ENCODE measurements at regions of chr10 and their contacts with region 1.

Region 1: DNA sequence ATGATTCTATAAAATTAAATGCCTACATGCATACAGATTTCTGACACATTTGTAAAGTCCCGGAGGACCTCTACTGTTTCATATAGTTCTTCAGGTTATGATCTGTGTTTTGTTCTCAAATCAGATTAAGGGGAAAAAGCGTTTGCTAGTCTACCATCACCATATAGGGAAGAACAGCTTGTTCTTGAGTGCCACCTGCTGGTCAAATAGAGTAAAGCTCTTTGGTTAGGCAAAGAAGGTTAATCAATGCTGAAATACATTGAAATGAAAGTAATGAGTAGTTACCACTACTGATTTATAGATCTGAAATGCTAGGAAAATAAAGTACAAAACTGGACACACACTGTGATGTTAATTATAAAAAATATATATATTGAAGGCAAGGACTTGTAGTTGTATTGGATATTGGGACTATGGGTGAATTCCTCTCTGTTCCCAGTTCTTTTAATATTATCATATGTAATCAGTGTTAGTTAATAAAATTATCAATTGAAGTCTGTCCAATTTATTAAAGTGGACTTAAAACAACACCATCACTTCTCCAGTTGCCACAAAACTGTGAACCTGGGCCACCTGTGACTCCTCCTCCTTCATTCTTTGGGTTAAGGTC is 72.6 kb upstream of the PDLIM1 start:
- DNase-seq: peak in 8 of 9 donors; percentile 6 to 59 (median 48)
- ATAC-seq: peak; percentile 75
- H3K4me3 ChIP-seq: no peak overlapping the region
- H3K4me3 Mint-ChIP-seq: no peak overlapping the region
- H3K27ac ChIP-seq: no peak overlapping the region
- H3K27ac Mint-ChIP-seq: no peak overlapping the region
- H3K4me1 ChIP-seq: no peaks in the 10 kb centered on the region
- H3K4me1 Mint-ChIP-seq: no peaks in the 10 kb centered on the region
- H3K27me3 ChIP-seq: no peaks in the 10 kb centered on the region
- H3K27me3 Mint-ChIP-seq: peaks cover 4 to 18% (median 5%) of the 10 kb centered on the region in 5 donors

Region 2: DNA sequence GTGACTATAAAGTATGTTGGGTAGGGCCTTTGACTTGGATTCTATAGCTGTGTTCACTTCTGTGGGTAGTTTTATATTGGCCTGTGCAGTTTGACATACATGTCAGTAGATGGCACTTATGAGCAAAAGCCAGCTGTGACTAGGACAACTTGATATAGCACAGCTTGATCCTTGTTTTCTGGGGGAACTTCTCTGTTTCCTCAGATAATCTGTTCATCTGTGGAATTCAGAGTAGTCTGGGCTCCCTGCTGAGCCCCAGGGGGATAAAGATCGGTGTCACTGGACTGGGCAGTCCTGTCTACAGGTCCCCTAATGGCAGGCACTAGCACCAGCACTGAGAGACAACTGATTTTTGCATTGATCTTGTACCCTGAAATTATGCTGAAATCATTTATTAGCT is 399.5 kb before region 1 on chr10:
- CTCF ChIA-PET with region 1: no interaction called
- POLR2A ChIA-PET with region 1: no interaction called
- intact Hi-C with region 1: loop called in 1 of 2 experiments (anchors 10 kb)
- DNase-seq: no peak
- ATAC-seq: no peak
- H3K4me3 ChIP-seq: no peak overlapping the region
- H3K4me3 Mint-ChIP-seq: no peak overlapping the region
- H3K27ac ChIP-seq: no peak overlapping the region
- H3K27ac Mint-ChIP-seq: no peak overlapping the region
- H3K4me1 ChIP-seq: no peaks in the 10 kb centered on the region
- H3K4me1 Mint-ChIP-seq: no peaks in the 10 kb centered on the region
- H3K27me3 ChIP-seq: no peaks in the 10 kb centered on the region
- H3K27me3 Mint-ChIP-seq: no peaks in the 10 kb centered on the region

Region 3: GRCh38 chr10:95133016-95133752 is 230.2 kb before region 1 on chr10:
- CTCF ChIA-PET with region 1: interaction called, 3 read pairs
- POLR2A ChIA-PET with region 1: no interaction called
- intact Hi-C with region 1: loop called in 1 of 2 experiments (anchors 1 kb)
- DNase-seq: peak in 8 of 9 donors; percentile 22 to 74 (median 48)
- ATAC-seq: peak; percentile 67
- H3K4me3 ChIP-seq: no peak overlapping the region
- H3K4me3 Mint-ChIP-seq: no peak overlapping the region
- H3K27ac ChIP-seq: no peak overlapping the region
- H3K27ac Mint-ChIP-seq: no peak overlapping the region
- H3K4me1 ChIP-seq: no peaks in the 10 kb centered on the region
- H3K4me1 Mint-ChIP-seq: no peaks in the 10 kb centered on the region
- H3K27me3 ChIP-seq: no peaks in the 10 kb centered on the region
- H3K27me3 Mint-ChIP-seq: peaks cover 0 to 9% (median 0%) of the 10 kb centered on the region in 5 donors

Region 4: GRCh38 chr10:95246579-95247051 is 116.8 kb before region 1 on chr10:
- CTCF ChIA-PET with region 1: interaction called, 6 read pairs
- POLR2A ChIA-PET with region 1: no interaction called
- intact Hi-C with region 1: loop called (anchors 1 kb)
- DNase-seq: peak in 7 of 9 donors; percentile 25 to 65 (median 43)
- ATAC-seq: peak; percentile 72
- H3K4me3 ChIP-seq: no peak overlapping the region
- H3K4me3 Mint-ChIP-seq: no peak overlapping the region
- H3K27ac ChIP-seq: no peak overlapping the region
- H3K27ac Mint-ChIP-seq: no peak overlapping the region
- H3K4me1 ChIP-seq: no peaks in the 10 kb centered on the region
- H3K4me1 Mint-ChIP-seq: peaks cover 0 to 38% (median 0%) of the 10 kb centered on the region in 7 donors
- H3K27me3 ChIP-seq: no peaks in the 10 kb centered on the region
- H3K27me3 Mint-ChIP-seq: peaks cover 2 to 28% (median 14%) of the 10 kb centered on the region in 5 donors

Region 5: DNA sequence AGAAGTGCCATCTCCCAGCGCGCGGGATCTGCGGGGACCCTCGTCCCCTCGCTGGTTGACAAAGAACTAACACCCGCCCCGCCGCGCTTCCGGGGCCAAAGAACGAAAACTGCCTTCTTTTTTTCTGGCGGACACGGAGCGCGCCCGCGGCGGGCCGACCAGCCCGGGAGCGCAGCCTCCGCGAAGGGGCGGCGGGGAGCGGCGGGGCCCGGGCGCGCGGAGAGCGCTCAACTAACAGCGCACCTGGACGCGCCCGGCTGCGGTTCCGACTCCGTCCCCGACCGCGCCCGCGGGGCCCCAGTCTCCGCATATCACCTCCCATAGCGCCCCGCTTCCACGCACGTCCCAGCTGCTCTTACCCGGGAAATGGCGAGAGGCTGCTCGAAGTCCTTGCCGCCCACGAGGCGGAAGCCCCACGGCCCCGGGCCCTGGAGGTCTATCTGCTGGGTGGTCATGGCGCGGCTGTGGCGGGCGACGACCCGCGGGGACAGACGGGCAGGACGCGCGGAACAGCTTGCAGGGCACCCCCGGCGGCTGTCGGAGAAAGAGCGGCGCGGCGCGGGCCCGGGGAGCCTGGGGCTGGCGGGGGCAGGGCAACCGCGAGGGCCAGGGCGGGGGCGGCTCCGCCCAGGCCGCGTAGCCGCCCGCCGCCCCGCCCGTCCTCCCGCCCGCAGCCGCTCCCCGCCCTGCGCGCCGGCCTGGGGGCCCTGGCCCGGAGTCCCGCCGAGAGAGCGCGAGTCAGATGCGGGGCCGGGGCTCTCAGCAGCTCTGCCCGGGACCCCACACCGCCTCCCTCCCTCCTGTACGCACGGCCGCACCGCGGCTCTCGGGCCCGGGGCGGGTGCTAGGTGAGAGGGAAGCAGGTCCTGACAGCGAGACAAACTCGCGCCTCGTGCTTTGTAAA is 72.7 kb before region 1 on chr10 and contains the start of gene PDLIM1:
- CTCF ChIA-PET with region 1: no interaction called
- POLR2A ChIA-PET with region 1: no interaction called
- intact Hi-C with region 1: loop called in 1 of 2 experiments (anchors 2 kb)
- DNase-seq: peak in 4 of 9 donors; percentile 16 to 57 (median 23)
- ATAC-seq: peak; percentile 82
- H3K4me3 ChIP-seq: peak within 1 kb of the TSS; percentile 43
- H3K4me3 Mint-ChIP-seq: peak within 1 kb of the TSS; percentile 71 to 88 (median 78)
- H3K27ac ChIP-seq: no peak within 1 kb of the TSS
- H3K27ac Mint-ChIP-seq: peak within 1 kb of the TSS in 2 of 9 donors; percentile 64 to 82
- H3K4me1 ChIP-seq: peaks cover 6 to 8% of the 10 kb centered on the region in 2 donors
- H3K4me1 Mint-ChIP-seq: peaks cover 11 to 51% (median 23%) of the 10 kb centered on the region in 7 donors
- H3K27me3 ChIP-seq: peaks cover 0 to 9% of the 10 kb centered on the region in 2 donors
- H3K27me3 Mint-ChIP-seq: peaks cover 39 to 59% (median 52%) of the 10 kb centered on the region in 5 donors
- total RNA-seq, gene PDLIM1: 0.32 to 27.6 (median 0.61) TPM

Region 6: DNA sequence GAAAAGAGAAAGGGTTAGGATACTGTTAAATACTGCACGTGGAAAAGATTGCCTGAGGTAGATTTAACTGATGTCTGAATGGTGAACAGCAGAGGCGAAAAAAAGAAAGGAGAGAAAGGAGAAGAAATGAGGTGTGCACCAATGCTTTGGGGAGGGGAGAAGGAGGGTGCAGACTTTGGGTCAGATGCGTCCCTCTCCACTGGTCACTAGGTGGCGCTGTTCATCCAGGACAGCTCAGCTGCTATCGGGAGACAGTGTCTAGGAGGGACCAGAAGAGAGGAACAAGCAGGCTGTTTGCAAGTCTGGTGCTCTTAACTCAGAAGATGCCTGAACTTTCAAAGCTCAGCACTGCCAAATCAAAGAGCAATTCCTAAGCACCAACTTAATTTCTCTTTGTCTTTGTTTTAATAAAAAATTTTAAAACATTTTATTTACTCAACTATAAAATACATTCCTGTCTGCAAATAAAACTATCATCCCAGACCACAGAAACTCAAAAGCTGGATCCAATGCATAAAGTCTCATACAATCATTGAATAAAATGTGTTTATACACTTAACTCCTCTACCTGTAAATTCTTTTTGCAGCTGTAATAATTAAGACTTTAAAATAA is 11.3 kb after region 1 on chr10:
- CTCF ChIA-PET with region 1: interaction called, 10 read pairs
- POLR2A ChIA-PET with region 1: no interaction called
- intact Hi-C with region 1: no loop called
- DNase-seq: peak in 4 of 9 donors; percentile 8 to 70 (median 15)
- ATAC-seq: peak; percentile 89
- H3K4me3 ChIP-seq: no peak overlapping the region
- H3K4me3 Mint-ChIP-seq: no peak overlapping the region
- H3K27ac ChIP-seq: no peak overlapping the region
- H3K27ac Mint-ChIP-seq: no peak overlapping the region
- H3K4me1 ChIP-seq: no peaks in the 10 kb centered on the region
- H3K4me1 Mint-ChIP-seq: peaks cover 0 to 6% (median 4%) of the 10 kb centered on the region in 7 donors
- H3K27me3 ChIP-seq: no peaks in the 10 kb centered on the region
- H3K27me3 Mint-ChIP-seq: peaks cover 8 to 56% (median 17%) of the 10 kb centered on the region in 5 donors

Measured in naive thymus-derived CD4-positive, alpha-beta T cell (primary cell).